Activated T-helper 2 cell treated with anti-CD3 and anti-CD28 coated beads, Interferon-gamma antibody, Interleukin-2, Interleukin-4, amounts not matched to agents 10 μg/mL and 5 μg/mL and 100 μg/mL, durations not matched to agents 14 hours and 24 hours and 36 hours (primary cell): ENCODE measurements at regions of chr14 and their contacts with region 1.

Region 1: GRCh38 chr14:97458661-97459579 is 661.7 kb downstream of the VRK1 start:
- DNase-seq: peak; percentile 81
- H3K4me3 Mint-ChIP-seq: peak overlapping the region; percentile 84
- H3K27ac Mint-ChIP-seq: peak overlapping the region; percentile 97
- H3K4me1 Mint-ChIP-seq: peaks cover 59% of the 10 kb centered on the region
- H3K27me3 Mint-ChIP-seq: no peaks in the 10 kb centered on the region

Region 2: DNA sequence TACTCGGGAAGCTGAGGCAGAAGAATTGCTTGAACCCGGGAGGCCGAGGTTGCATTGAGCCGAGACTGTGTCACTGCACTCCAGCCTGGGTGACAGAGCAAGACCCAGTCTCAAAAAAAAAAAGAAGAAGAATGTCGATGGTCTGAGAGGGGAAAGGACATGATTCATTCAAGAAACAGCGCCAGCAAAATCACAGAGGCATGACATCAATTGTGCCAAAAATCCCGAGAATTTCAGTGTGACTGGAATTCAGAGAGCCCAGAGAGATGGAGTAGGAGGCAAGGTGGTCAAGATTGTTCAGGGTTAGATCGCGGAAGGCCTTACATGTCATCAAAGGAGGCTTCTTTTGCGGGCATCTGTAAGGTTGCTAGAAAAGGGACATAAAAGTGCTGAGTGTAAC is 178.4 kb before region 1 on chr14:
- intact Hi-C with region 1: no loop called
- DNase-seq: no peak
- H3K4me3 Mint-ChIP-seq: no peak overlapping the region
- H3K27ac Mint-ChIP-seq: no peak overlapping the region
- H3K4me1 Mint-ChIP-seq: peaks cover 13% of the 10 kb centered on the region
- H3K27me3 Mint-ChIP-seq: peaks cover 4% of the 10 kb centered on the region

Region 3: DNA sequence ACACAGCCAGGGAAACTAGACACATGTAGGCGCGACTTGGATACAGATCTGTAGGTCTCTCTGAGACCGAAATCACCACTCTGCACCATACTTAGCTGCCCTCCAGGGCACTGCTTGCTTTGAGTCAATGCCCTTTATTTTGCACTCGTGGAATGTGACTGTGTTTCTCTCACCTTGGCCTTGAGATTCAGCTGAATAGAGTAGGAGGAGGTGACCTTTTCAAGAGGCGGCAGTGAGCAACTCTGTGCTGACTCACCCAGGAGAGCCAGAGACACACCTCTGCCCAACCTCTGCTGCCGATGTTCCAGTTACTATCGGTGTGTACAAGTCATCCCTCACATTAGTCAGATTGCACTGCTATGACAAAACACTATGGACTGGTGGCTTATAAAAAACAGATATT is 78.4 kb before region 1 on chr14:
- intact Hi-C with region 1: loop called (anchors 1 kb)
- DNase-seq: peak; percentile 38
- H3K4me3 Mint-ChIP-seq: no peak overlapping the region
- H3K27ac Mint-ChIP-seq: peak overlapping the region; percentile 76
- H3K4me1 Mint-ChIP-seq: peaks cover 65% of the 10 kb centered on the region
- H3K27me3 Mint-ChIP-seq: no peaks in the 10 kb centered on the region

Region 4: GRCh38 chr14:97602438-97603117 is 143.7 kb after region 1 on chr14:
- intact Hi-C with region 1: loop called (anchors 5 kb)
- DNase-seq: peak; percentile 72
- H3K4me3 Mint-ChIP-seq: no peak overlapping the region
- H3K27ac Mint-ChIP-seq: no peak overlapping the region
- H3K4me1 Mint-ChIP-seq: peaks cover 29% of the 10 kb centered on the region
- H3K27me3 Mint-ChIP-seq: no peaks in the 10 kb centered on the region

Region 5: DNA sequence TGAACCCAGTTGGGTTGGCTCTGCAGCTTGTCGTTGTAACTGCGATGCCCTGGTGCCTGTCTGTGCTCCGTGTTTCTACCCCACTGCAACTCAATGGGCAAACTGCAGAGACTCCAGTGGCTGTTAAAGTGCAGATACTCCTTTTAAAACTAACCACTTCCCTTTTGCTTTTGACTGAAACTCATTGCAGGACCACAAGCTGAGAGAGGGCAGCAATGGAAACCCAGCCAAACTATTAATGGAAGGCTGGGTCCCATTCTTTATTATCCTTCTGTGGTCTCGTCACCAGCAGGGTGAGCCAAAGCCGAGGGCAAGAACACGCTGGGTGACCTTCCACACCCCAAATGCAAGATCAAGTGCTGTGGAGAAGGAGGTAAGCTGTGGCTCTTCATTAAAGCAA is 248.7 kb after region 1 on chr14:
- intact Hi-C with region 1: loop called (anchors 5 kb)
- DNase-seq: peak; percentile 22
- H3K4me3 Mint-ChIP-seq: no peak overlapping the region
- H3K27ac Mint-ChIP-seq: no peak overlapping the region
- H3K4me1 Mint-ChIP-seq: peaks cover 79% of the 10 kb centered on the region
- H3K27me3 Mint-ChIP-seq: no peaks in the 10 kb centered on the region

Region 6: DNA sequence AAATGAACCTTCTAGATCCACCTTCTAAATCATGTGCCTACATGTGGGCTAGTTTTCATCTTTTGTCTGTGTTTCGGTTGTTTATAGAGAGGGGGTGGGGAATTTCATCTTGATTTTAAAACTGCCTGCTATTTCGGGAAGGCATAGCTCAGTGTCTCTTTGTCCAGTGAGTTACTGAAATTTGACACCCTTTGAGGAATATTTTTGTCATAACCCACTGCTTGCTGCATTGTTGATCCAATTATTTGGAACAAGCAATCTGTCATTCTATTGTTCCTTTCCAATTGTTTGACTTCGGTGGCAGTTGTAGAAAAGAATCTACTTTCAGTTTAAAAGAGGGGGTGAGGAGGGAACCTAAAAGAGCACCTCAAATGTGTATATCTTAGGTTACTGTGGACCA is 424.9 kb after region 1 on chr14:
- intact Hi-C with region 1: no loop called
- DNase-seq: no peak
- H3K4me3 Mint-ChIP-seq: no peak overlapping the region
- H3K27ac Mint-ChIP-seq: no peak overlapping the region
- H3K4me1 Mint-ChIP-seq: peaks cover 7% of the 10 kb centered on the region
- H3K27me3 Mint-ChIP-seq: no peaks in the 10 kb centered on the region

Region 7: DNA sequence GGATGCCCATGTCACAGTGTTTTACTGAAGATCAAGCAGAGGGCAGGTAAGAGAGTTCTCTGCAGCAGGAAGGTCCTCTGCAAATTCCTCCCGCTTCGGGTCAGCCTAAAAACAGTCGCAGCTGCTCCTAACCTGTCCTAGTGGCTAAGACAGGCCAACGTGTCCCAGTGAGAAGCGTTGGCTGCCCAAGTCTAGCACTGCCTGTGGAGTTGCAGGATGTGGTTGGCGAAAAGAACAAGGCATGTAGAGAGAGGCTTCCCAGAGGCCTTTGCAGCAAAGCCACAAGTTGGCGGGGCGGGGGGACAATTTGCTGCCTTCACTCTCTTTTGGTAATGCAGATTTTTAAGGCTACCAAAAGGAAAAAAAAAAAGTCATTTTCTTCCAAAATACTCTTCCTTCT is 1473.0 kb after region 1 on chr14:
- intact Hi-C with region 1: loop called (anchors 5 kb)
- DNase-seq: peak; percentile 68
- H3K4me3 Mint-ChIP-seq: peak overlapping the region; percentile 43
- H3K27ac Mint-ChIP-seq: peak overlapping the region; percentile 62
- H3K4me1 Mint-ChIP-seq: peaks cover 48% of the 10 kb centered on the region
- H3K27me3 Mint-ChIP-seq: no peaks in the 10 kb centered on the region